ENCODE measurements at regions of chrX and their contacts with region 1.

Region 1: GRCh38 chrX:13087322-13088155 is 43.1 kb upstream of the FAM9C start:
- DNase-seq: peak; percentile 81
- ATAC-seq: peak; percentile 54
- H3K4me3 Mint-ChIP-seq: peak overlapping the region; percentile 75
- H3K27ac Mint-ChIP-seq: peak overlapping the region; percentile 96
- H3K4me1 Mint-ChIP-seq: peaks cover 78% of the 10 kb centered on the region
- H3K27me3 Mint-ChIP-seq: no peaks in the 10 kb centered on the region

Region 2: DNA sequence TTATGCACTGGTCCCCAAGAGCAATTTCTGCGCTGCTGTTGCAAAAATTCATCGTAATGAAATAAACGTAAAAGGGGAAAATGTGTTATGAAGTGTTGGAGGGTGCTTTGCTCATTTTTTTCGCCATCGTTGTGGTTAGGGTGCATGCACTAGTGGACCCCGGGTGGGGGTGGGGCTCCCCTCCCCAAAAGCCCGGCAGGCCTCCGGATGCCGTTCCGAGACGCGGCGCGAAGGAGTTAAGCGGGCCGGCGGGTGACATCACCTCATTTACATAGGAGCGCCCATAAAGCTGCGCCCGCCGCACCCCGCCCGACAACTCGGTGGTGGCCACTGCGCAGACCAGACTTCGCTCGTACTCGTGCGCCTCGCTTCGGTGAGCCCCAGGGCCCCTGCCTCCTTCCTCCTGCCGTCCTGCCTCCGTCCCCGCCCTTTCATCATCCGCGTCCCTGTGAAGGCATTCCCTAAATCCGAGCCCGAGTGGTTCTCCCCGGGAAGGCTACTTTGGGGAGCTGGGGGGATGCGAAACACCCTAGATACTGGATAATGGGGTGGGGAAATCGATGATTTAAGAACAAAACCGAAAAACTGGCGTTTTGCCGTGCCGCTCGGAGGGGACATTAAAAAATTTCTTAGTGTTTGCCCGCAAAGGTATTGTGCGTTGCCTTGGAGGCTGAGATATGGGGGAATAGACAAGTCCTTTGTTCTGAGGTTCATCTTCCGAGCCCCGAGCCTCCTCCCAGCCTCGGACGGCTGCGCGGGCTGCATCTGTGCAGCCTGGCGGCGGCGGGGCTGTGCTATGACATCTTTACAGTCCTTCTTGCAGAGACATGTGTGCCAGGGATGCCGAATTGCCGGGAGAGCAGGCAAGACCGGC is 112.5 kb before region 1 on chrX and contains the start of gene TMSB4X:
- CTCF ChIA-PET with region 1: interaction called, 93 read pairs
- DNase-seq: peak; percentile 90
- ATAC-seq: peak; percentile 62
- H3K4me3 Mint-ChIP-seq: peak within 1 kb of the TSS; percentile 95
- H3K27ac Mint-ChIP-seq: peak within 1 kb of the TSS; percentile 98
- H3K4me1 Mint-ChIP-seq: peaks cover 34% of the 10 kb centered on the region
- H3K27me3 Mint-ChIP-seq: no peaks in the 10 kb centered on the region
- total RNA-seq, gene TMSB4X: 6,072 to 7,639 TPM

Region 3: GRCh38 chrX:12984629-12985319 is 102.8 kb before region 1 on chrX:
- CTCF ChIA-PET with region 1: interaction called, 93 read pairs
- DNase-seq: peak; percentile 76
- ATAC-seq: peak; percentile 80
- H3K4me3 Mint-ChIP-seq: peak overlapping the region; percentile 45
- H3K27ac Mint-ChIP-seq: peak overlapping the region; percentile 97
- H3K4me1 Mint-ChIP-seq: peaks cover 65% of the 10 kb centered on the region
- H3K27me3 Mint-ChIP-seq: no peaks in the 10 kb centered on the region

Region 4: DNA sequence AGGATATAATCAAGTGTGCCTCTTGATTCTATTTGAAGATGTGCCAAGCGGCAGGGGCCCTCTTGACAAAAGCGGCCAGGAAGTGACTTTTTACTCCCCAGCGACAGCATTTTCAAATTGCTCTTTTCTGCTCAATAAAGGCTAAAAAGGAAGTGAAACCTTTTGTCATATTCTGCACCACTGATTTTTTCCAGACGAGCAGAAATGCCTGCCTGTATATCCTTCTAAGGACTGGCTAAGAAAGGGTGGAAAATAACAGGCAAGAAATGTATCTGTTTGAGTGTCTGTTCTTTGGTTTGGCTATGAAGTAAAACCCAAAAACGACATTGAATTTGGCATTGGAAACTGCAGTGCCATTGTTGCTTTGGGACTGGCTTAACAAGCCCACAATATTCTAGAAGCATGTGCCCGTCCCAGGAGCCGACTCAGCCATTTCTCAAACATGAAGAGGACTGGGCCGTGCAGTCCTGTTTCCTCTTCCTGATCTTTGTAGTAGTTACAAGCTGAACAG is 87.2 kb before region 1 on chrX:
- CTCF ChIA-PET with region 1: interaction called, 13 read pairs
- DNase-seq: peak; percentile 54
- ATAC-seq: peak; percentile 60
- H3K4me3 Mint-ChIP-seq: peak overlapping the region; percentile 73
- H3K27ac Mint-ChIP-seq: peak overlapping the region; percentile 97
- H3K4me1 Mint-ChIP-seq: peaks cover 76% of the 10 kb centered on the region
- H3K27me3 Mint-ChIP-seq: no peaks in the 10 kb centered on the region

Region 5: GRCh38 chrX:13190073-13190472 is 102.5 kb after region 1 on chrX:
- CTCF ChIA-PET with region 1: no interaction called
- DNase-seq: no peak
- ATAC-seq: no peak
- H3K4me3 Mint-ChIP-seq: no peak overlapping the region
- H3K27ac Mint-ChIP-seq: no peak overlapping the region
- H3K4me1 Mint-ChIP-seq: no peaks in the 10 kb centered on the region
- H3K27me3 Mint-ChIP-seq: no peaks in the 10 kb centered on the region

Region 6: GRCh38 chrX:13487731-13488523 is 400.4 kb after region 1 on chrX:
- CTCF ChIA-PET with region 1: interaction called, 49 read pairs
- DNase-seq: peak; percentile 52
- ATAC-seq: peak; percentile 80
- H3K4me3 Mint-ChIP-seq: no peak overlapping the region
- H3K27ac Mint-ChIP-seq: peak overlapping the region; percentile 79
- H3K4me1 Mint-ChIP-seq: peaks cover 20% of the 10 kb centered on the region
- H3K27me3 Mint-ChIP-seq: no peaks in the 10 kb centered on the region